RWPE1 (cell line): ENCODE measurements at regions of chr17 and their contacts with region 1.

Region 1: DNA sequence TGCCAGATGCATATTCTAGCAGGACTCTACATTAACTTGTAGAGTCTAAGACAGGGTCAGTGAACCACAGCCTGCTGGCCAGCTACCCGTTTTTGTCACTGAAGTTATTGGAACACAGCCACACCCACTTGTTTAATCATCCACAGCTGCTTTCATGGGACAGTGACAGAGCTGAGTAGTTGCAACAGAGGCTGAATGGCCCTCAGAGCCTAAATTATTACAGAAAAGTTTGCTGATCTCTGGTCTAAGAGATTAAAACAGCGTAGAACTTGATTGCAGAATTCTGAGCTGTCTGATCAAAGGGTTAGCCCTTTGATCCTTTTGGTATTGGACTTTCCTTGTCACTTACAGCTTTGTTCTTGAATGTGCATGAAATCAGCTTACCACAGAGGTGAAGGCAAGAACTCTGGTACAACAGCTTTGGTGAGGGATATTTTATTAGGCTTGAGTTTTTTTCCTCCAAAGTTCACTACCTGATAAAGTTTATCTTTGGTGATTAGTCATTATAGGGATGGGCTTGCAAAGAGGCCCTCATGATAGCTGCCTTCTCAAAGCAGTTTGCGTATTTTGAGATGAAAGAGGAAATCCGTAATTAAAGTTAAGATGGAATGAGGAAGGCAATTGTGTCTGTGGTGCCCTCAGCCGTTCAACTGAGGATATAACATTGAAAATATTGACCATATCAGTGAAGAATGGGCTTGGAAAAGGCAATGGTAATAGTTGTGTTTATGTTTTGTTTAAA is 23.6 kb downstream of the ALDH3A2 start:
- DNase-seq: no peak
- H3K27ac ChIP-seq: peak overlapping the region; percentile 52
- CTCF ChIP-seq: no peak

Region 2: DNA sequence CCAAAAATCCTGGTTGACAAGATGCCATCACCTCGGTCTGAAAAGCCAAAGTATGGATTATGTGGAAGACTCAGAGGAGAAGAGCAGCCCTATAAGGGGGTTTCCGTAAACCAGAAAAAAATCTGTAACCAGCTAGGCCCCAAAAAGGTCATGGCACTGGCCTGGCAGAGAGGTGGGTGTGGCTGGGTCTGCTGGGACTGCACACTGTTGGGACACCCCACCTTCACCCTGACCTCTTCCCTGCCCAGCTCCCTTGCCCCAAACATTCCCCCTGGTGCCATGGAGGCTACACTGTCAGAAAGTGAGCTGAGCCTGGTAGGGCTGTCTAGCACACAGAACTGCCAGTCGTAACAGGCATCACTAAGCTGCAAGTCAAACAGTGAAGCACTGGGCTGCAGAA is 37.7 kb after region 1 on chr17:
- CTCF ChIA-PET with region 1: interaction called, 11 read pairs
- POLR2A ChIA-PET with region 1: no interaction called
- DNase-seq: no peak
- H3K27ac ChIP-seq: peak overlapping the region; percentile 72
- CTCF ChIP-seq: no peak